PC-3 (cell line): ENCODE measurements at regions of chr11 and their contacts with region 1.

Region 1: DNA sequence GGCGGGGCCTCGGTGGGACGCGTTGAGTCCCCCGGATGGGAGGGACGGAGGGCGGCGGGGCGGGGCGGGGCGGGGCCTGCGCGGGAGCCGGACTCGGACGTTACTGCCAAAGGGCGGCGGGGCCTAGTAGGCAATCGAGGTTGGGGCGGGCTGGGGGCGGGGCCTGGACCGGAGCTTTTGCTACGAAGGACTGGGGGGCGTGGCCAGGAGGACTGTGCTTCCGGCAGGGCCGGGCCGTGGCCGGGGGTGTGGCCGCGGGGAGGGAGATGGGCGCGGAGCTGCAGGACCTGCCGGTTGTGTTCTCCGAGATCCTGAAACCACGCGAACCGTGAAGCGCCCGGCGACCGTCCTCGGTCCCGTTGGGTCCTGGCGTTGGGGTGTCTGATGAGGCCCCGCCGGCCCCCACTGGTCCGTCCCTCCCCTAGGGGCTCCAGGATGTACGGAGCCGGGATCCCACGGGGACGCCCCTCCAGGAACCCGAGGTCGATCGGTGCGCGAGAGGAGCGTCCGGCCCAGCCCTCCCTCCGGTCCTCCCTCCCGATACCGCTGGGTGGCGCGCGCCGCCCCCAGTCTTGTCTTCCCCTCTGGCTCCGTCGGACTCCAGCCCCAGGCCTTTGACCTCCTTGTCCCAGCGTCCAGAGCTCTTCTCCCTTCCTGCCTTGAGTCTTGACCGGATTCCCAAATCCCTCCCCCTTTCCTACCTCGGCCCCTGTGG is 648 bp upstream of the NUDT8 start:
- DNase-seq: peak; percentile 98
- ATAC-seq: peak; percentile 78
- H3K4me3 ChIP-seq: peak overlapping the region; percentile 92
- H3K27ac ChIP-seq: peak overlapping the region; percentile 48
- H3K4me1 ChIP-seq: peaks cover 18% of the 10 kb centered on the region
- H3K27me3 ChIP-seq: no peaks in the 10 kb centered on the region
- CTCF ChIP-seq: peak; percentile 87

Region 2: GRCh38 chr11:67656278-67656922 is 26.0 kb after region 1 on chr11:
- CTCF ChIA-PET with region 1: interaction called, 32 read pairs
- POLR2A ChIA-PET with region 1: interaction called, 8 read pairs
- intact Hi-C with region 1: loop called (anchors 1 kb)
- DNase-seq: no peak
- ATAC-seq: no peak
- H3K4me3 ChIP-seq: no peak overlapping the region
- H3K27ac ChIP-seq: no peak overlapping the region
- H3K4me1 ChIP-seq: peaks cover 17% of the 10 kb centered on the region
- H3K27me3 ChIP-seq: no peaks in the 10 kb centered on the region
- CTCF ChIP-seq: no peak

Region 3: DNA sequence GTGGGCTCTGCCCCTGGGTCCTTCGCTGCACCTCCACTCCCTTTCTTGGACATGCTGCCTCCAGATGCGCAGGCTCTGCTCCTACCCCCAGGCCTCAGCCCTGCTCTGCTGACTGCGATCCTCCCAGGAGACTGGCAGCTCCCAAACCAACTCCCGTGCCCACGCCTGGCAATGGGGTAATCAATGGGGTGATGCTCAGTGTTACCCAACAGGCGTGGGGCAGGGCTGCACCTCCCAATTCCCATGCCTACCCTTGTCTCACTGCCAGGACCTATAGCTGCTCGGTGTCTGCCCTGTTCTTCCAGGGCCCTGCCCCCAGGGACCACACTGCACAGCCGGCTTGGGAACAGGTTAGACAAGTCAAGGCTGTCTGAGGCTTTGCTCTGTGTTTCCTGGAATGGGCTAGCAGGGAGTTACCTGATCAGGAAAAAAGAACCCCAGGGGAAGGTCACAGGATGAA is 44.1 kb after region 1 on chr11 and contains the start of gene ALDH3B2:
- CTCF ChIA-PET with region 1: no interaction called
- POLR2A ChIA-PET with region 1: no interaction called
- intact Hi-C with region 1: no loop called
- DNase-seq: peak; percentile 91
- ATAC-seq: peak; percentile 97
- H3K4me3 ChIP-seq: no peak within 1 kb of the TSS; the same call in 1 of the 2 replicates
- H3K27ac ChIP-seq: peak within 1 kb of the TSS; percentile 31
- H3K4me1 ChIP-seq: peaks cover 20% of the 10 kb centered on the region
- H3K27me3 ChIP-seq: no peaks in the 10 kb centered on the region
- CTCF ChIP-seq: no peak
- total RNA-seq, gene ALDH3B2: 0.40 TPM in 1 of 2 replicates, not detected in the other

Region 4: GRCh38 chr11:68003846-68004550 is 373.6 kb after region 1 on chr11 and contains the start of gene UNC93B1:
- CTCF ChIA-PET with region 1: no interaction called
- POLR2A ChIA-PET with region 1: no interaction called
- intact Hi-C with region 1: no loop called
- DNase-seq: peak; percentile 92
- ATAC-seq: peak; percentile 93
- H3K4me3 ChIP-seq: peak within 1 kb of the TSS; percentile 83
- H3K27ac ChIP-seq: no peak within 1 kb of the TSS
- H3K4me1 ChIP-seq: peaks cover 14% of the 10 kb centered on the region
- H3K27me3 ChIP-seq: no peaks in the 10 kb centered on the region
- CTCF ChIP-seq: no peak
- total RNA-seq, gene UNC93B1: 66.8 and 77.0 TPM in 2 replicates